Activated CD4-positive, alpha-beta T cell treated with anti-CD3 and anti-CD28 coated beads, Interleukin-2, amount 10 ng/mL, durations not matched to agents 7 days and 5 days (primary cell): ENCODE measurements at regions of chr11 and their contacts with region 1.

Region 1: DNA sequence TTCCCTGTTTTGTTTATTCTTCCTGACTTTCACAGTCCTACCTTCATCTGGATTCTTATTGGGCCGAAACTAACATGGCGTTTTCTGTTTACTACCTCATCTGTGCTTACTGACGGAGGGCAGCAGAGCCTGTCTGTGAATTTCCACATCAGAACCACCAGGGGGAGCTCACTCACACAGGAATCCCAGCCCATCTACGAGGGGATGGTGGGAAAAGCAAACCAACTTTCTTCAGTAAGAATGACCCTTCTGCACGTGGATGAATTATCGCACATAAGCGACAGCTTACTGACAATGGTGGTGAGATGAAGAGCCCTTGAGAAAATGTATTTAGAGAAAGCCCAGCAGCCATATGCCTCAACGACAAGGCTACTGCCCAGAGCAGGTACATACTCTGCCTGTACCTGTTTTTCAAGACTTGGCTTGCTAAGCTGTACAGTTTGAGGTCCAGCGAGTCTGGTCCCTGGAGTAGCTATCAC is 42.5 kb downstream of the LARGE2 start:
- DNase-seq: peak; percentile 59
- H3K4me3 Mint-ChIP-seq: no peak overlapping the region
- H3K27ac Mint-ChIP-seq: no peak overlapping the region
- H3K4me1 Mint-ChIP-seq: no peaks in the 10 kb centered on the region
- H3K27me3 Mint-ChIP-seq: no peaks in the 10 kb centered on the region

Region 2: DNA sequence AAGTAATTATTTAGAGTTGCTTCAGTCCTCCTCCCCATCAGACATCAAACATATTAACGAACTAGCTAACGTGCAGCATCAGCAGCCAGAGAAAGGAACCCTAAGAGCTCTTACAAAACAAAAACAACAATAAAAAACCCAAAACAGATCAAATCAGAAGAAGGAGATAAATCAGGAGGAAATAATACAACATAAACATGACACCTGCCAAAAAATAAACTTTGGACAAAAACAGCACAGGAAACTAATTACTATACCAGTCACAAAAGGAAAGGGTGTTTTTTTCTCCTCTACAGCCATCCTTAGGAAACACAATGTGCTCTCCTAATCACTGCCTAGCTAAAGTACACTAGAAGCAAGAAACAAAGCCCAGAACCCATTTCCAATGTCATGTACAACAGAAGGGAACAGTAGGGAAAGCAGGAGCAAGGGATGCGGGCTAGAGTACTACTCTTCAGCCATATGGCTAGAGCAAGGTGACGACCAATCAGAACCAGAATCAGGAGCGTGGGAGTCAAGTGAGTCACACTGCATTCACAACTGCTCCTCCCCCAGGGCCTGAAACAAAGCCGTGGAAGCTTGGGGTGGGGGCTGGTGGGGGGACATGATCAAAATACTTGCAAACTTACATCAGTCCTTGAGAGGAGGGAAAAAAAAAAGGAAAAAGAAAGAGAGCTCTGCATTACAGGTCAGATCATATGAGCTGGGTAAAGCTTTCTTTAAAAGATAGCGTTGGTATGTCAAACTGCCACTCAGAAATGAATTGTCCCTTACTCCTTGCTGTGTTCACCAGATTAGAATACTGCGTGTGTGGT is 17.9 kb after region 1 on chr11:
- CTCF ChIA-PET with region 1: interaction called, 12 read pairs
- POLR2A ChIA-PET with region 1: no interaction called
- DNase-seq: no peak
- H3K4me3 Mint-ChIP-seq: no peak overlapping the region
- H3K27ac Mint-ChIP-seq: no peak overlapping the region
- H3K4me1 Mint-ChIP-seq: peaks cover 13% of the 10 kb centered on the region
- H3K27me3 Mint-ChIP-seq: no peaks in the 10 kb centered on the region

Region 3: DNA sequence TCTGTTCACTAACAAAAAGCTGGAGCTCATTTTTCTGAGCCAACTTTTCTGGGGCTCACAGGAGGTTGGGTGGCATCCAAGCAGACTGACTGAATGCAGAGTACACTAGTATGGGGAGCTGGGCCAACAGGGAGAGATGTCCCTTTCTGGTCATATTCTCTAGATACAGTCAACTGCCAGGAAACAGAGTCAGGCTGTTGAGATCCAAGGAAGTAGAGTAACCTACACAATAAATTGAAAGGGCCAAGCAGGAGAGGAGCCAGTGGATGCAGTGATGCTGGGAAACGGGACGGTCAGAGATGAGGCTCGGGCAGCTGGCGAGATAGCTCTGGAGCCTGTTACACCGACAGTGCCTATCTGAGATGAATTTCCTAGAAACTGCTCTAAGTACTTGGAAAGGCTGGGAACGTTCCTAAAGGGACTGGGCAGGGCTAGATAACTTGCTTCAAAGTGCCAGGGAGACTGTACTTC is 28.6 kb after region 1 on chr11:
- CTCF ChIA-PET with region 1: interaction called, 14 read pairs
- POLR2A ChIA-PET with region 1: no interaction called
- DNase-seq: no peak
- H3K4me3 Mint-ChIP-seq: no peak overlapping the region
- H3K27ac Mint-ChIP-seq: no peak overlapping the region
- H3K4me1 Mint-ChIP-seq: no peaks in the 10 kb centered on the region
- H3K27me3 Mint-ChIP-seq: no peaks in the 10 kb centered on the region

Region 4: DNA sequence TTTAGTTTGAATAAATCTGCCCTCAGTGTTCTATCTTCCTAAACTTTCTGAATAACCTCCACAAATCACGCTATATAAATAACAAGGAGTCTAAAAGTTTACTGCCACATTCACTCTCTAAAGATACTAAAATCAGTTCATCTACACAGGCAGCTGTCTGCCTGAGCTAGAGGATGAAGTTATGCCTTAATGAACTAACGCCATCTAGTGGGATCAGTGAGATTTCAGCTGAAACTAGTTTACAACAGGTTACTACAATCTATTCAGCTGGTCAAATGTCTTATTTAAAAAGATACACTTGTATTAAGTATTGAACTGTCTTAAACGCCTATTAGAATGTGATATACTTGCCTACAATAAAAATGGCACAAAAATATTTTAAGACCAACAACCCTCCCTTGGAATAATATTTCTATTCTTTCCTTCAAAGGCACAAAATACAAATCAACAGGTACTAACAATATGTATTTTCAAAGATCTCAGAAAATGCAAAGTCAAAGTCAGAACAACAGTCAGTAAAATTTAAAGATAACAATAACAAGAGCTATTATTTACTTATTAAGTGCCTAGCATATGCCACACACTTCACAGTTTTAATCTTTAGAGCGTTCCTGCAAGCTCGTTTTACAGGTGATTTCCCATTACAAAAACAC is 41.6 kb after region 1 on chr11:
- CTCF ChIA-PET with region 1: interaction called, 11 read pairs
- POLR2A ChIA-PET with region 1: no interaction called
- DNase-seq: peak; percentile 67
- H3K4me3 Mint-ChIP-seq: no peak overlapping the region
- H3K27ac Mint-ChIP-seq: no peak overlapping the region
- H3K4me1 Mint-ChIP-seq: peaks cover 2% of the 10 kb centered on the region
- H3K27me3 Mint-ChIP-seq: no peaks in the 10 kb centered on the region

Region 5: DNA sequence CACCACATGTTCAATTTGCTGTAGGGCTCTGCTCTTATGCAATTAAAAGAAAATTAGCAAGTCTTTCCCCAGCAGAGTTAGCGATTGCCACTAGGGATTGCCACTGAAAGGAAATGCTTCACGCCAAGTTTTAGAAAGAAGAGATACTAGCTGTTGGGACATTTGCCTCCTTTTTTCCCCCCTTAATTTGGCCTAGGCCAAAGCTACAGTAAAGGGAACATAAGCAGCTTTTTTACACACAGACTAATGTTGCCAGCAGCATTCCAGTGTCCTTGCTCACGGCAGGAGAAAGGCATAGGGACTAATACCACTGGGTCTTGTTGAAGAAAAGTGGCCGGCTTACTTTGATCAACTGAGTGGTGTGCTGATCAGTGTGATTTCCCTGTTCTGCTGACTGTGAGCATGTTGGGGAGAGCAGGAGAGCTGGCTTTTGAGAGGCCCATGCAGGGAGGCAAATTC is 85.1 kb after region 1 on chr11:
- CTCF ChIA-PET with region 1: no interaction called
- POLR2A ChIA-PET with region 1: no interaction called
- DNase-seq: no peak
- H3K4me3 Mint-ChIP-seq: no peak overlapping the region
- H3K27ac Mint-ChIP-seq: no peak overlapping the region
- H3K4me1 Mint-ChIP-seq: peaks cover 6% of the 10 kb centered on the region
- H3K27me3 Mint-ChIP-seq: no peaks in the 10 kb centered on the region